ENCODE measurements at regions of chr17 and their contacts with region 1.

Region 1: DNA sequence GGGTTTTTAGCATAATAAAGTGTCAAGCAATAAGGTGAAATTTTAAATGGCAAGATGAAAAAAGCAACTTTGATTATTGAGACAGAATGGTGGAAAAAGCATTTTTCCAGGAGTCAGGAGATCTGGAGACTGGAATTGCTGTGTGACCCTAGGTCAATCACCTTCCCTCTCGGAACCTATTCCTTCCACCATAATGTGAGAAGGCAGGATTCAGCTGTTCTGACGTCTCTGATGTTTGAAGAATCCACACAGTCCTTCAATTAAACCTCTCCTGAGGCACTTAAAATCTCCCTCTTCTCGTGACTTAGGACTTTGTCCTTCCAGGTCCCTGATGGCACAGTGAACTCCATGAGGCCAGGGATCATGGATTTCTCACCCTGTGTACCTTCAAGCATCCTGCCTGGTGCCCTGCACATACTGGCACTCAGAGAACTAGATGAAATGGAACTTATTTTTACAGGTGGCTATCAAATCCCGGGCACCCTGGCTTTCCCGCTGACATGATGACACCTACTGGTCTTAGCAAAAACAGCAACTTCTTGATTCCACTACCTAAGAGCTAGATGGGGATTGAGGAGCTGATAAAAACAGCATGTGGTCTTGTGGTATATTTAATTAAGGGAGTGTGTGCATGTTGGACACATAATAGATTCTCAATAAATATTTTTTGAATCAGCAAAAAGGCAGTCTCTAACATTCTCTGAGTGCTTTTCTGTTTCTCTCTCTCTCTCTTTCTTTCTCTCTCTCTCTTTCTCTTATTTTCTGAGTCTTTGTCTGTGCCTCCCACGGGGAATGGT is 2.3 kb upstream of the CCDC182 start:
- DNase-seq: no peak
- H3K4me3 ChIP-seq: no peak overlapping the region
- H3K27ac ChIP-seq: no peak overlapping the region
- H3K4me1 ChIP-seq: peaks cover 0 to 13% (median 10%) of the 10 kb centered on the region in 4 donors
- H3K27me3 ChIP-seq: peaks cover 0 to 10% (median 0%) of the 10 kb centered on the region in 4 donors
- CTCF ChIP-seq: peak; percentile 63 to 72 (median 70)
- EP300 ChIP-seq: no peak
- POLR2A ChIP-seq: no peak

Region 2: GRCh38 chr17:57130761-57131461 is 616.5 kb before region 1 on chr17:
- intact Hi-C with region 1: loop called (anchors 5 kb)
- DNase-seq: peak; percentile 94
- H3K4me3 ChIP-seq: peak overlapping the region; percentile 17 to 26 (median 24)
- H3K27ac ChIP-seq: no peak overlapping the region
- H3K4me1 ChIP-seq: peaks cover 0 to 7% (median 3%) of the 10 kb centered on the region in 4 donors
- H3K27me3 ChIP-seq: no peaks in the 10 kb centered on the region
- CTCF ChIP-seq: peak in 2 of 3 experiments; percentile 74 to 87
- EP300 ChIP-seq: no peak
- POLR2A ChIP-seq: no peak

Region 3: GRCh38 chr17:57243171-57243948 is 504.1 kb before region 1 on chr17:
- intact Hi-C with region 1: loop called (anchors 5 kb)
- DNase-seq: no peak
- H3K4me3 ChIP-seq: no peak overlapping the region
- H3K27ac ChIP-seq: no peak overlapping the region
- H3K4me1 ChIP-seq: peaks cover 7 to 16% (median 9%) of the 10 kb centered on the region in 4 donors
- H3K27me3 ChIP-seq: no peaks in the 10 kb centered on the region
- CTCF ChIP-seq: peak; percentile 98 to 100 (median 99)
- EP300 ChIP-seq: no peak
- POLR2A ChIP-seq: no peak

Region 4: GRCh38 chr17:57597531-57598453 is 149.6 kb before region 1 on chr17:
- intact Hi-C with region 1: loop called (anchors 5 kb)
- DNase-seq: no peak
- H3K4me3 ChIP-seq: no peak overlapping the region
- H3K27ac ChIP-seq: no peak overlapping the region
- H3K4me1 ChIP-seq: peaks cover 4 to 9% (median 9%) of the 10 kb centered on the region in 4 donors
- H3K27me3 ChIP-seq: no peaks in the 10 kb centered on the region
- CTCF ChIP-seq: peak; percentile 78 to 87 (median 80)
- EP300 ChIP-seq: no peak
- POLR2A ChIP-seq: no peak